Left lung (tissue), 14 donors: ENCODE measurements at regions of chr1 and their contacts with region 1.

Region 1: GRCh38 chr1:211680752-211681327 is 5.4 kb upstream of the NEK2 start:
- DNase-seq: peak; percentile 68 to 89 (median 79)
- ATAC-seq: peak; percentile 95
- H3K4me3 ChIP-seq: no peak overlapping the region
- H3K27ac ChIP-seq: no peak overlapping the region
- H3K4me1 ChIP-seq: peaks cover 0 to 2% of the 10 kb centered on the region in 2 donors
- H3K27me3 ChIP-seq: no peaks in the 10 kb centered on the region
- CTCF ChIP-seq: peak; percentile 58 to 60

Region 2: GRCh38 chr1:211752951-211753486 is 72.2 kb after region 1 on chr1:
- intact Hi-C with region 1: no loop called
- DNase-seq: no peak
- ATAC-seq: no peak
- H3K4me3 ChIP-seq: no peak overlapping the region
- H3K27ac ChIP-seq: no peak overlapping the region
- H3K4me1 ChIP-seq: no peaks in the 10 kb centered on the region
- H3K27me3 ChIP-seq: no peaks in the 10 kb centered on the region
- CTCF ChIP-seq: no peak

Region 3: GRCh38 chr1:212035123-212035834 is 354.4 kb after region 1 on chr1 and contains the starts of genes DTL and INTS7:
- intact Hi-C with region 1: loop called in 1 of 2 experiments (anchors 10 kb)
- DNase-seq: peak; percentile 98 to 100 (median 100)
- ATAC-seq: peak; percentile 95
- H3K4me3 ChIP-seq: peak within 1 kb of the TSS; percentile 49 to 61
- H3K27ac ChIP-seq: peak within 1 kb of the TSS; percentile 82 to 87
- H3K4me1 ChIP-seq: peaks cover 8 to 57% of the 10 kb centered on the region in 2 donors
- H3K27me3 ChIP-seq: no peaks in the 10 kb centered on the region
- CTCF ChIP-seq: peak; percentile 83 to 85
- polyA plus RNA-seq, gene DTL: 26.8 to 38.3 (median 29.7) TPM
- polyA plus RNA-seq, gene INTS7: 18.9 to 28.7 (median 22.1) TPM